ENCODE measurements at regions of chr17 and their contacts with region 1.

Region 1: DNA sequence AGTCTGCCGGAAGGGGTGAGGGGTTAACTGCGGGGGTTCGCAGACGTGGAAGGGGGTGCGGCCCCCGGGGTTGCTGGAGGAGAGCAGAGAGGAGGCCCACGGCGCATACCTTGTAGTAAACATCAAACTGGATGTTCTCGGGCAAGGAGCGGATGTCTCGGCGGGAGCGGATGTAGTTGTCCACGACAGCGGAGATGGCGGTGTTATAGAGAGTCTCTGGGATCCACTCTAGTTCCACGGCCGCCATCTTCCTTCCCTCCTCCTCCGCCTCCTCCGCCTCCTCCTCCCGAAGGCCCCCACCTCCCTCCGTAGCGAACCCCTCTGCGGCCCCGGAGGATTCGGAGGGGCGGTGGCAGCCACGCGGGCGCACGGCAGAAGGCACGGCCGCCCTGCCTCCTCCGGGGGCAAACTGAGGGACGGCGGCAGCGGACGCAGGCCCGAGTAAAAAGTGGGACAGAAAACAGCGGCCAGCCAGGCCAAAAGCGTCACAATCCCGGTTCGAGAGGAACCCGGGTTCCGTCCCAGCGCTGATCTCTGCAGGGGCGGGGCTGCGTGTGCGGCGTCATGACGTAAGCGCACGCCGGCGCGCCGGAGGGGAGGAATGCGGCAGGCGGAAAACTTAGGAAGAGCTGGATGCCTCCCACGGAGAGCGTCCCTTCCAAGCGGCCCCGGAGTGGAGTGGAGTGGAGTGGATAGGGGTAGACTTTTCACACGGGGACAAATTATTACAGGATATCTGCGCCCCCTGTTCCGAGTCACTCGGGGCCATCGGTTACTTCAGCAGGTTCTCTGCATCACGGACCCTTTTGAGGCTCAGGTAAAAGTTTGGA is at the start of gene APPBP2:
- DNase-seq: peak; percentile 87 to 94 (median 90)
- H3K4me3 ChIP-seq: peak within 1 kb of the TSS; percentile 81
- H3K27ac ChIP-seq: peak within 1 kb of the TSS; percentile 89 to 99
- H3K4me1 ChIP-seq: peaks cover 9% of the 10 kb centered on the region
- H3K27me3 ChIP-seq: no peaks in the 10 kb centered on the region
- CTCF ChIP-seq: no peak
- EP300 ChIP-seq: no peak
- POLR2A ChIP-seq: peak; percentile 80
- total RNA-seq, gene APPBP2: 27.0 to 72.1 (median 55.0) TPM

Region 2: GRCh38 chr17:60468371-60468770 is 57.5 kb before region 1 on chr17:
- intact Hi-C with region 1: loop called in 1 of 4 experiments (anchors 10 kb)
- DNase-seq: no peak
- H3K4me3 ChIP-seq: no peak overlapping the region
- H3K27ac ChIP-seq: no peak overlapping the region
- H3K4me1 ChIP-seq: peaks cover 5% of the 10 kb centered on the region
- H3K27me3 ChIP-seq: no peaks in the 10 kb centered on the region
- CTCF ChIP-seq: no peak
- EP300 ChIP-seq: no peak
- POLR2A ChIP-seq: no peak

Region 3: GRCh38 chr17:60577147-60577915 is 51.4 kb after region 1 on chr17:
- intact Hi-C with region 1: loop called in 1 of 4 experiments (anchors 10 kb)
- DNase-seq: peak in 3 of 5 donors; percentile 50 to 63 (median 53)
- H3K4me3 ChIP-seq: peak overlapping the region; percentile 32
- H3K27ac ChIP-seq: peak overlapping the region in 1 of 2 donors; percentile 63
- H3K4me1 ChIP-seq: peaks cover 13% of the 10 kb centered on the region
- H3K27me3 ChIP-seq: no peaks in the 10 kb centered on the region
- CTCF ChIP-seq: peak in 1 of 3 donors; percentile 18
- EP300 ChIP-seq: no peak
- POLR2A ChIP-seq: no peak

Region 4: GRCh38 chr17:60599620-60600489 is 74.0 kb after region 1 on chr17 and contains the start of gene PPM1D:
- intact Hi-C with region 1: loop called (anchors 2 to 10 kb)
- DNase-seq: peak; percentile 100
- H3K4me3 ChIP-seq: peak within 1 kb of the TSS; percentile 83
- H3K27ac ChIP-seq: peak within 1 kb of the TSS; percentile 92 to 96
- H3K4me1 ChIP-seq: peaks cover 4% of the 10 kb centered on the region
- H3K27me3 ChIP-seq: no peaks in the 10 kb centered on the region
- CTCF ChIP-seq: peak in 2 of 3 donors; percentile 12 to 64
- EP300 ChIP-seq: no peak
- POLR2A ChIP-seq: peak; percentile 91
- total RNA-seq, gene PPM1D: 11.9 to 35.5 (median 28.7) TPM